Naive thymus-derived CD4-positive, alpha-beta T cell (primary cell): ENCODE measurements at regions of chr19 and their contacts with region 1.

Region 1: GRCh38 chr19:9140159-9140874 is at the start of gene ZNF317:
- DNase-seq: peak; percentile 72 to 94 (median 88)
- ATAC-seq: peak; percentile 94
- H3K4me3 ChIP-seq: peak within 1 kb of the TSS; percentile 94
- H3K4me3 Mint-ChIP-seq: peak within 1 kb of the TSS; percentile 93 to 99 (median 98)
- H3K27ac ChIP-seq: peak within 1 kb of the TSS; percentile 95
- H3K27ac Mint-ChIP-seq: peak within 1 kb of the TSS; percentile 95 to 99 (median 97)
- H3K4me1 ChIP-seq: peaks cover 17 to 21% of the 10 kb centered on the region in 2 donors
- H3K4me1 Mint-ChIP-seq: peaks cover 28 to 55% (median 49%) of the 10 kb centered on the region in 7 donors
- H3K27me3 ChIP-seq: no peaks in the 10 kb centered on the region
- H3K27me3 Mint-ChIP-seq: peaks cover 0 to 7% (median 0%) of the 10 kb centered on the region in 5 donors
- total RNA-seq, gene ZNF317: 39.4 to 75.5 (median 54.5) TPM

Region 2: GRCh38 chr19:8832132-8833021 is 307.9 kb before region 1 on chr19 and contains the starts of genes MBD3L1 and ZNF558:
- CTCF ChIA-PET with region 1: no interaction called
- POLR2A ChIA-PET with region 1: no interaction called
- intact Hi-C with region 1: loop called (anchors 1 to 2 kb)
- DNase-seq: peak; percentile 99 to 100 (median 99)
- ATAC-seq: peak; percentile 92
- H3K4me3 ChIP-seq: peak within 1 kb of the TSS; percentile 79
- H3K4me3 Mint-ChIP-seq: peak within 1 kb of the TSS; percentile 86 to 98 (median 90)
- H3K27ac ChIP-seq: peak within 1 kb of the TSS; percentile 93
- H3K27ac Mint-ChIP-seq: peak within 1 kb of the TSS; percentile 93 to 99 (median 96)
- H3K4me1 ChIP-seq: peaks cover 9 to 11% of the 10 kb centered on the region in 2 donors
- H3K4me1 Mint-ChIP-seq: peaks cover 6 to 38% (median 24%) of the 10 kb centered on the region in 7 donors
- H3K27me3 ChIP-seq: no peaks in the 10 kb centered on the region
- H3K27me3 Mint-ChIP-seq: peaks cover 0 to 16% (median 0%) of the 10 kb centered on the region in 5 donors
- total RNA-seq, gene MBD3L1: not detected
- total RNA-seq, gene ZNF558: 18.7 to 44.9 (median 26.3) TPM

Region 3: DNA sequence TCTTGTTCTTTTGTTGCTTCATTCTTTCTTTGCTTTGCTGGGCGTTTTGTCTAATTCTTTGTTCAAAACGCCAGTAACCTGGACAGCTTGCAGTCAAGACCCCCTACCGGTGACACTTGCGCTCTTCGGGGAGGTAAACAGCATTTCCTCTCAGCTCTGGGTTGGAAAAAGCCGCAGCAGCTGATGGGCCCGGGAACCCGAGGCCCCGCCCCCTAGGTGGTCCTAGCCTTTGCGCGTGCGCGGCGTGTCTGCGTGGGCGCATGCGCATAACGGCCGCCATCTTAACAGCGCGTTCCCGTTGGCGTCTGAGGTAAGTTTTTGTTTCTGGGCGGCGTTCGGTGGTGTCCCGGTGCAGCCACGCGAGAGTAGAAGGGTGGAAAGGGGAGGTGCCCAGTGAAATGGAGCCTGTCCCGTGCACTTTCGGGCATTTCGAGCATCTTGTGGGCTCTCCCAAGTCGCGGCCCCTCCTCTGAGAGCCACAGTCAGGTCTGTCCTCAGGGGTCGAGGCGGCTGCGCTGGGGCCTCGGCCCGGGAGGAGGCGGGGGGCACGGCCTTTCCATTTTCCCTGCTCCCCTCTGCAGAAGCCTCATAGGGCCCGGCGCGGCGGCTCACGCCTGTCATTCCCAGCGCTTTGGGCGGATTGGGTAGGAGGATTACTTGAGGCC is 183.7 kb after region 1 on chr19 and contains the start of gene ZNF559:
- CTCF ChIA-PET with region 1: no interaction called
- POLR2A ChIA-PET with region 1: no interaction called
- intact Hi-C with region 1: loop called (anchors 1 to 2 kb)
- DNase-seq: peak; percentile 93 to 99 (median 97)
- ATAC-seq: peak; percentile 97
- H3K4me3 ChIP-seq: peak within 1 kb of the TSS; percentile 74
- H3K4me3 Mint-ChIP-seq: peak within 1 kb of the TSS; percentile 92 to 99 (median 95)
- H3K27ac ChIP-seq: peak within 1 kb of the TSS; percentile 85
- H3K27ac Mint-ChIP-seq: peak within 1 kb of the TSS; percentile 91 to 97 (median 93)
- H3K4me1 ChIP-seq: peaks cover 0 to 10% of the 10 kb centered on the region in 2 donors
- H3K4me1 Mint-ChIP-seq: peaks cover 6 to 46% (median 29%) of the 10 kb centered on the region in 7 donors
- H3K27me3 ChIP-seq: no peaks in the 10 kb centered on the region
- H3K27me3 Mint-ChIP-seq: peaks cover 0 to 2% (median 0%) of the 10 kb centered on the region in 5 donors
- total RNA-seq, gene ZNF559: 9.1 to 58.2 (median 16.5) TPM

Region 4: GRCh38 chr19:9621156-9622037 is 481.1 kb after region 1 on chr19 and contains the start of gene ZNF561:
- CTCF ChIA-PET with region 1: no interaction called
- POLR2A ChIA-PET with region 1: no interaction called
- intact Hi-C with region 1: loop called (anchors 1 to 2 kb)
- DNase-seq: peak; percentile 73 to 93 (median 89)
- ATAC-seq: peak; percentile 94
- H3K4me3 ChIP-seq: peak within 1 kb of the TSS; percentile 96
- H3K4me3 Mint-ChIP-seq: peak within 1 kb of the TSS; percentile 96 to 100 (median 99)
- H3K27ac ChIP-seq: peak within 1 kb of the TSS; percentile 89
- H3K27ac Mint-ChIP-seq: peak within 1 kb of the TSS; percentile 99 to 100 (median 100)
- H3K4me1 ChIP-seq: peaks cover 12 to 13% of the 10 kb centered on the region in 2 donors
- H3K4me1 Mint-ChIP-seq: peaks cover 13 to 34% (median 25%) of the 10 kb centered on the region in 7 donors
- H3K27me3 ChIP-seq: no peaks in the 10 kb centered on the region
- H3K27me3 Mint-ChIP-seq: peaks cover 0 to 4% (median 0%) of the 10 kb centered on the region in 5 donors
- total RNA-seq, gene ZNF561: 35.9 to 72.5 (median 42.3) TPM

Region 5: GRCh38 chr19:9834726-9835506 is 694.6 kb after region 1 on chr19 and contains the start of gene PIN1:
- CTCF ChIA-PET with region 1: no interaction called
- POLR2A ChIA-PET with region 1: interaction called, 3 read pairs
- intact Hi-C with region 1: loop called in 1 of 2 experiments (anchors 1 kb)
- DNase-seq: peak; percentile 98 to 100 (median 99)
- ATAC-seq: peak; percentile 98
- H3K4me3 ChIP-seq: peak within 1 kb of the TSS; percentile 92
- H3K4me3 Mint-ChIP-seq: peak within 1 kb of the TSS; percentile 83 to 97 (median 95)
- H3K27ac ChIP-seq: peak within 1 kb of the TSS; percentile 71
- H3K27ac Mint-ChIP-seq: peak within 1 kb of the TSS; percentile 82 to 99 (median 94)
- H3K4me1 ChIP-seq: peaks cover 10 to 11% of the 10 kb centered on the region in 2 donors
- H3K4me1 Mint-ChIP-seq: peaks cover 16 to 32% (median 20%) of the 10 kb centered on the region in 7 donors
- H3K27me3 ChIP-seq: no peaks in the 10 kb centered on the region
- H3K27me3 Mint-ChIP-seq: no peaks in the 10 kb centered on the region
- total RNA-seq, gene PIN1: 41.4 to 93.2 (median 61.1) TPM

Region 6: DNA sequence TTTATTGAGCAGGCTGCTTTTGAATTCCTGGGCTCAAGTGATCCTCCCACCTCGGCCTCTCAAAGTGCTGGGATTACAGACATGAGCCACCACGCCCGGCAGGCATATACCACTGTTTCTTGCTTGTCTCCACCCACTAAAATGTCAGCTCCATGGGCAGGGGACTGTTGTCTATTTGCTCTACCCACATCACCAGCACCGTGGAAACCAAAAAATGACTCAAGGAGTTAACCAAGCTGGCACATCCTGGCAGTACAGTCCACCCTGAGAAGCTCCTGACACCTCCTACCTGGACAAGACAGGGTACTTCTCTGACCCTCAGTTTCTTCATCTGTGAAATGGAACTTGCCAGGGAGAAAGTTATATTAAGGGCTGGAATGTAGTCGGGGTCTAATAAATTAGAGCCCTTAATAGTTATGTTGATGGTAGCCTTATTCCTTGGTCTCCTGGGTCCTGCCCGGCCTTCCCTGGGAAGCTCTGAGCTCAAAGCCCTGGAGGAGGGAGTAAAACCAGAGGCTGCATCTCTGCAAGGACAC is 886.9 kb after region 1 on chr19:
- CTCF ChIA-PET with region 1: no interaction called
- POLR2A ChIA-PET with region 1: no interaction called
- intact Hi-C with region 1: loop called in 1 of 2 experiments (anchors 10 kb)
- DNase-seq: no peak
- ATAC-seq: no peak
- H3K4me3 ChIP-seq: no peak overlapping the region
- H3K4me3 Mint-ChIP-seq: no peak overlapping the region
- H3K27ac ChIP-seq: no peak overlapping the region
- H3K27ac Mint-ChIP-seq: no peak overlapping the region
- H3K4me1 ChIP-seq: no peaks in the 10 kb centered on the region
- H3K4me1 Mint-ChIP-seq: peaks cover 0 to 4% (median 0%) of the 10 kb centered on the region in 7 donors
- H3K27me3 ChIP-seq: no peaks in the 10 kb centered on the region
- H3K27me3 Mint-ChIP-seq: peaks cover 3 to 24% (median 12%) of the 10 kb centered on the region in 5 donors

Region 7: DNA sequence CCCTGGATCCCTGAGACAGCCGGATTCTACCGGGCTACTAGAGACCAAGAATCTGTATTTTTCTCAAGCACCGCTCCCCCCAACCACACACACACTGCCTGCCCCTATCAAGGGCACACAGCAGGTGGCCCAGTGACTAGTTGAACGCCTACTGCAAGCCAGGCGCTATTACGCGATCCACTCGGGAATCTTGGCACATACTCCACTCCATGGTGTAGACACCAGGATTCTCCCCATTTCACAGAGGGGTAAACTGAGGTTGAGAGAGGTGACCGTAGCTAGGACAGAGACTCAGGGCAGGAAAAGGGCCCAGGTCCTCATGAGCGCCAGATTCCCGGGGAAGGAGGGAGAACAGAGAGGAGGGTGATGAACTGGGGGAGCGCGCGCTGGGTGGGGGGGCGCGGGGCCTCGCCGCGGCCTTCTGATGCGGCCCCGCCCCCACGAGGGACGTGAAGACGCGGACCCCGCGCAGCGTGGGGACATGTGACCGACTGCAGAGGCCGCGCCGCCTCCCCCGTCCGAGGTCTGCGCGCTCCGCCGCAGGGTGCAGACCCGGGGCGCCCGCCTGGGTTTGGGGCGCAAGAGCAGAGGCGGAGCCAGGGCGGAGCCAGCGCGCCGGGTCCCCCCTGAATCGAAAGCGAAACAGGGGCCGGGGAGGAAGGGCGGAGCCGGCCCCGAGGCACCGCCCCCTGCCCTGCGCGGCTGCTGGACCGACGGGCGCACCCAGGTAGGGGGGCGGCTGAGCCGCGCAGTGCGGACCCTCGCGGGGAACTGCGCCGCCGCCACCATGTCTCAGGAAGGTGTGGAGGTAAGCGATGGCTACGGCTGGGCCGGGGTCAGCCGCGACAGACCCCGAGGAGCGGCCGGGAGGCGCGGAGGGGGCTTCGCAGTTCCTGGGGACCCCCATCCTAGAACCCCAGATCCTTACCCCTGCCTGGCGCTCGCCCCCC is 945.6 kb after region 1 on chr19 and contains the start of gene SHFL:
- CTCF ChIA-PET with region 1: no interaction called
- POLR2A ChIA-PET with region 1: no interaction called
- intact Hi-C with region 1: no loop called
- DNase-seq: peak; percentile 71 to 90 (median 83)
- ATAC-seq: peak; percentile 98
- H3K4me3 ChIP-seq: peak within 1 kb of the TSS; percentile 94
- H3K4me3 Mint-ChIP-seq: peak within 1 kb of the TSS; percentile 75 to 92 (median 90)
- H3K27ac ChIP-seq: peak within 1 kb of the TSS; percentile 90
- H3K27ac Mint-ChIP-seq: peak within 1 kb of the TSS; percentile 81 to 92 (median 88)
- H3K4me1 ChIP-seq: peaks cover 4 to 9% of the 10 kb centered on the region in 2 donors
- H3K4me1 Mint-ChIP-seq: peaks cover 8 to 21% (median 8%) of the 10 kb centered on the region in 7 donors
- H3K27me3 ChIP-seq: no peaks in the 10 kb centered on the region
- H3K27me3 Mint-ChIP-seq: no peaks in the 10 kb centered on the region
- total RNA-seq, gene SHFL: 67.8 to 112 (median 102) TPM